Motor neuron (in vitro differentiated cells): ENCODE measurements at regions of chr17 and their contacts with region 1.

Region 1: DNA sequence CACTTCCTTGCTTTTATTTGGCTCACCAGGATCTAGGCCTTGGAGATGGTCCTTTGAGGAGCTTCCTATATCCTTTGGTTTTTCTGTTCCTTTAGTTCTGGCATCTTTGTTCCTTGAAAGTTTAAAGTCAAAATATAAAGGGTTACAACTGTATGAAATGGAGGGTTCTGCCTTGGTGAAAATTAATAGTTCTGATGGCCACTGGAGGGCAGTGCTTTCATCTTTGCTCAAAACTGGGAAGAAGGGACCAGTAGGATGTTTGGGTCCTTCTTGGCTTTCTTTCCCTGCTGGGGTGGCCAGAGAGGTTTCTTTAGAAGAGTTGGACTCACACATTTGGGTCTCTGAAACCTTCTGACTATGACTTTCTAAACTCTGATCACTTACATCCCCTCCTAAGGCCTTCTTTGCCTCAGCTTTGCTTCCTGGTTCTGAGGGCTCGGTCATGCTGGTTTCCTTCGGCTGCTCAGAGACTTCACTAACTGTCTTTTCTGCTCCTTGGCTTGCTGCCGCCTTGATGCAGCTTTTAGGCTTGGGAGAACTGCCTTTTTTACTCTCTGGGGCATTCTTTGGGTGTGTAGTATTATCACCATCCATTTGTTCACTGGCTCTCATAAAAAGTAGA is 10.9 kb upstream of the ITGA2B start:
- ATAC-seq: peak; percentile 37 to 64 (median 47)
- H3K4me3 ChIP-seq: no peak overlapping the region
- H3K27ac ChIP-seq: no peak overlapping the region
- H3K4me1 ChIP-seq: no peaks in the 10 kb centered on the region

Region 2: DNA sequence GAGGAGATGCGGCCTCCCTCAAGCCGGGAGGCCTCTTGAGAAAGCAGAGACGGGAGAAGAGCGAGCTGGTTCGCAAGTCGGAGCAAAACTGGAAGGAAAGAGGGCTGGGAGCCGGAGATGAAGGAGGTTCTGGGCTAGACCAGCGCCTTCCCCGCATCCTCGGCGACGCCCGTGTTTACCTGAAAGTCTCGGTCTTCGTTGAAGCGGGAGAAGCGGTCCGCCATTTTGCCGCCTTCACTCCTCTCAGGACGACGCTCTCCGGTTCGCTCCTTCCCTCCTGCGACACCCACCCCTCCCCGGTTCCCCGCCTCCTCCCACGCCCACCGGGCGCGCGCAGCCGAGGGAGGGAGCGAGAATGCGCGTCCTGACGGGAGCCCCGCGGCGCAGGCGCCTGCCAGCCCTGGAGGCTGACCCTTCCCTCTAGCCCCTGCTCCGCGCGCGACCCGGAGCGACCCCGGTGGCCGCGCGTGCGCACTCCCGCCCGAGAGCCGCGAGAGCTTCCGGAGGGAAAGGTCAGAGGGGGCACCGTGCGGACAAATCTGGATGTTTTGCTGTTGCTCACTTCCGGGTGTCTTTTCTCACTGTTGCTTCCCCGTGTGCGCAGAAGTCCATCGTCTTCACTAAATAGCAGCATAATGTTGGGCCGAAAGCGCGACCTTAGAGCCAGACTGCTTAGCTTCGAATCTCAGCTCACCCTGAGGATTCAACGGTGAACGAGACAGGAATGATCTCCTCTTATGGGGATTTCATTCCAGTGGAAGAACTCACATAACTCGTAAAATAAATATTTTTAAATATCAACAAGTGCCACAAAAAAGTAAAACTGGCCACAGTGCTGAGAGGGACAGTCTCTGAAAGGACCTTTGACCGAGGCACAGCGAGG is 103.1 kb after region 1 on chr17 and contains the start of gene GPATCH8:
- in situ Hi-C with region 1: loop called in 1 of 9 experiments (anchors 25 kb)
- ATAC-seq: peak; percentile 91 to 96 (median 94)
- H3K4me3 ChIP-seq: peak within 1 kb of the TSS; percentile 60 to 77 (median 65)
- H3K27ac ChIP-seq: peak within 1 kb of the TSS; percentile 91 to 97
- H3K4me1 ChIP-seq: peaks cover 18 to 32% of the 10 kb centered on the region in 2 donors
- total RNA-seq, gene GPATCH8: 25.6 to 96.4 (median 29.7) TPM

Region 3: GRCh38 chr17:44636562-44636961 is 236.2 kb after region 1 on chr17:
- in situ Hi-C with region 1: loop called in 1 of 9 experiments (anchors 25 kb)
- ATAC-seq: peak in 7 of 8 experiments; percentile 45 to 75 (median 67)
- H3K4me3 ChIP-seq: no peak overlapping the region
- H3K27ac ChIP-seq: no peak overlapping the region
- H3K4me1 ChIP-seq: no peaks in the 10 kb centered on the region

Region 4: GRCh38 chr17:44672479-44673093 is 272.2 kb after region 1 on chr17:
- in situ Hi-C with region 1: loop called in 1 of 9 experiments (anchors 25 kb)
- ATAC-seq: peak in 3 of 8 experiments; percentile 21 to 38 (median 36)
- H3K4me3 ChIP-seq: no peak overlapping the region
- H3K27ac ChIP-seq: no peak overlapping the region
- H3K4me1 ChIP-seq: no peaks in the 10 kb centered on the region

Region 5: DNA sequence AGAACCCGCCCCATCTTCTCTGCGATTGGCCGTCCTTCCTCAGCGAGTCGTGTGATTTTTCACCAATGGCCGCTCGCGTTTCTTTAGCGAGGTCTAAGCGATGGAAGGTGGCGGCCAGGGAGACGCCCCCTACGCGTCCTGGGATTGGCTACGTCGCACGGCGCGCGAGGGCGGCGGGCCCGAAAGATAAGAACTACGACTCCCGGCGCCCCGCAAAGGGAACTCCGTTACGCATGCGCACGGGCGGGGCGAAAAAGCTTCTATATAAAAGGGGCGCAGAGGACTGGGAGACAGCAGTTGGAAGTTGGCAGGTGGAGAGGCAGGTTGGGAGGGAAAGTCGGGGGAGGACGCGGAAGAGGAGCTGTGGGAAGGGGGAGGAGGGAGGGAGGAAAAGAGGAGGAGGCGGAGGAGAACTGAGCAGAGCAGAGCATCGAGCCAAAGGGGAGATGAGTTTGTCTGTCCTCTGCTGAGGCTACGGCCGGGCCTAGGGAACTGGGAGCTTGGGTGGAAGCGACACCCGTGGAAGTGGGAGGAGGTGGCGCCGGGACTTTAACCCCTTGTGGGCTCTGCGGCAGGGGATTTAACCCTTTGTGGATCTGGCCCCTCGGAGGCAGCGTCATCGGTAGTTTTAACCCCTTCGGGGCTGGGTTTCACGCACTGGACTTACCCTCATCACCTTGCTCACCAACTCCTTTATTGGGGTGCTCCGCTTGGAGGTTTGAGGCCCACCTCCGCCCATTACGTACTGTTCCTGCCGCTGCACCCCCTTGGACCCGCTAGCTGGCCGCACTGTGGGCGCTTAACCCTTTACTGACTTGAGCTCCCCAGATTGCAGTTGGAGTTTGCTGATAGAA is 748.1 kb after region 1 on chr17 and contains the start of gene HEXIM1:
- in situ Hi-C with region 1: no loop called
- ATAC-seq: peak; percentile 55 to 81 (median 76)
- H3K4me3 ChIP-seq: peak within 1 kb of the TSS; percentile 57 to 65 (median 61)
- H3K27ac ChIP-seq: peak within 1 kb of the TSS; percentile 97 to 99
- H3K4me1 ChIP-seq: peaks cover 11 to 20% of the 10 kb centered on the region in 2 donors
- total RNA-seq, gene HEXIM1: 10.6 to 49.8 (median 23.0) TPM